Heart right ventricle (tissue), 16 donors: ENCODE measurements at regions of chr2 and their contacts with region 1.

Region 1: GRCh38 chr2:200695191-200695590 is 109.4 kb downstream of the AOX1 start:
- DNase-seq: peak; percentile 13 to 32
- ATAC-seq: peak in 7 of 8 donors; percentile 56 to 90 (median 67)
- H3K4me3 ChIP-seq: no peak overlapping the region
- H3K27ac ChIP-seq: peak overlapping the region in 1 of 10 donors; percentile 20
- H3K4me1 ChIP-seq: peaks cover 0 to 14% (median 0%) of the 10 kb centered on the region in 9 donors
- H3K27me3 ChIP-seq: no peaks in the 10 kb centered on the region
- CTCF ChIP-seq: no peak

Region 2: DNA sequence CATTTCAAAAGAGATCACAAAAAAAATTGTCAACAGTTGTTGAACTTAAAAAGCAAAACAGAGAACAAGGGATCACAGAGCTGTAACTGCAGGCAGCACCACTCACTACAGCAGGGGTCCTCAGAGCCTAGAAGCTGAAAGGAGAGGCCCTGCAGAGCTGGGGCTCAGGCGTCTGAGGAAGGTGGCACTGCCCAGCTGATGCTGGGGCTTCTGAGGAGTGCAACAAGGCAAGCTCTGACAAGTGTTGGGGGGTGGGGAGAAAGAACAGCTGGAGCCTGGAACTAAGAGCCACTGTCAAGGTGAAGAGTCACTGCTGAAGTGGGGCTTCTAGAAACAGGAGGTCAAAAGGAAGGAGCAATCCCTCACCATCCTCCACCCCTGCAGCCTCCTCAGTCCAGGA is 890.4 kb before region 1 on chr2:
- intact Hi-C with region 1: no loop called
- DNase-seq: no peak
- ATAC-seq: no peak
- H3K4me3 ChIP-seq: no peak overlapping the region
- H3K27ac ChIP-seq: no peak overlapping the region
- H3K4me1 ChIP-seq: no peaks in the 10 kb centered on the region
- H3K27me3 ChIP-seq: no peaks in the 10 kb centered on the region
- CTCF ChIP-seq: no peak

Region 3: GRCh38 chr2:200274116-200275075 is 420.8 kb before region 1 on chr2:
- intact Hi-C with region 1: no loop called
- DNase-seq: no peak
- ATAC-seq: no peak
- H3K4me3 ChIP-seq: no peak overlapping the region
- H3K27ac ChIP-seq: no peak overlapping the region
- H3K4me1 ChIP-seq: peaks cover 0 to 8% (median 0%) of the 10 kb centered on the region in 9 donors
- H3K27me3 ChIP-seq: no peaks in the 10 kb centered on the region
- CTCF ChIP-seq: no peak

Region 4: DNA sequence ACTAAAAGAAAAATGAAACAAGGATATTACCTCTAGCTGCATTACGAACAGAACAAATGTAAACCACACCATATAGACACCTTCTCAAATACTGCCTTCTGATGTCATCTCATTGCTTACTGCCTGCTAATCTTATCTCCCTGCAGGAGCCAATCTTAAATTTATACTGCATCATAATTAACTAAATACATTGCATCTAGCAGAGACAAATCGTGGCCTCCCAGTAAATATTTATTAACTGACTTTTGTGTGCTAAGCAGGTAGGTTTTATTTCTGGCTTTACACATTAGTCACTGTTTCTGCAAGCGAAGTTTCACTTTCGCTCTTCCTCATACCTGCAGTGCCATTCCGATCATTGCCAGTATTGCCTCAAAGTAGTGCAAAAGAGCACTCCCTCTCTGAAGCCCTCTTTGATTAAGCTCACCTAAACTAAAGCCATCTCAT is 321.2 kb before region 1 on chr2:
- intact Hi-C with region 1: no loop called
- DNase-seq: no peak
- ATAC-seq: no peak
- H3K4me3 ChIP-seq: peak overlapping the region in 1 of 10 donors; percentile 24
- H3K27ac ChIP-seq: peak overlapping the region in 1 of 10 donors; percentile 59
- H3K4me1 ChIP-seq: peaks cover 5 to 66% (median 51%) of the 10 kb centered on the region in 9 donors
- H3K27me3 ChIP-seq: no peaks in the 10 kb centered on the region
- CTCF ChIP-seq: no peak

Region 5: GRCh38 chr2:200585730-200586643 is 109.2 kb before region 1 on chr2 and contains the start of gene AOX1:
- intact Hi-C with region 1: loop called in 3 of 10 experiments (anchors 5 to 10 kb)
- DNase-seq: peak in 1 of 2 donors; percentile 46
- ATAC-seq: peak; percentile 51 to 78 (median 71)
- H3K4me3 ChIP-seq: peak within 1 kb of the TSS; percentile 16 to 71 (median 58)
- H3K27ac ChIP-seq: peak within 1 kb of the TSS in 7 of 10 donors; percentile 18 to 71 (median 33)
- H3K4me1 ChIP-seq: peaks cover 0 to 14% (median 7%) of the 10 kb centered on the region in 9 donors
- H3K27me3 ChIP-seq: peaks cover 0 to 5% (median 0%) of the 10 kb centered on the region in 7 donors
- CTCF ChIP-seq: peak in 1 of 9 donors; percentile 6
- total RNA-seq, gene AOX1: 0.72 to 22.3 (median 2.2) TPM